CD4-positive, alpha-beta T cell (primary cell): ENCODE measurements at regions of chr1 and their contacts with region 1.

Region 1: DNA sequence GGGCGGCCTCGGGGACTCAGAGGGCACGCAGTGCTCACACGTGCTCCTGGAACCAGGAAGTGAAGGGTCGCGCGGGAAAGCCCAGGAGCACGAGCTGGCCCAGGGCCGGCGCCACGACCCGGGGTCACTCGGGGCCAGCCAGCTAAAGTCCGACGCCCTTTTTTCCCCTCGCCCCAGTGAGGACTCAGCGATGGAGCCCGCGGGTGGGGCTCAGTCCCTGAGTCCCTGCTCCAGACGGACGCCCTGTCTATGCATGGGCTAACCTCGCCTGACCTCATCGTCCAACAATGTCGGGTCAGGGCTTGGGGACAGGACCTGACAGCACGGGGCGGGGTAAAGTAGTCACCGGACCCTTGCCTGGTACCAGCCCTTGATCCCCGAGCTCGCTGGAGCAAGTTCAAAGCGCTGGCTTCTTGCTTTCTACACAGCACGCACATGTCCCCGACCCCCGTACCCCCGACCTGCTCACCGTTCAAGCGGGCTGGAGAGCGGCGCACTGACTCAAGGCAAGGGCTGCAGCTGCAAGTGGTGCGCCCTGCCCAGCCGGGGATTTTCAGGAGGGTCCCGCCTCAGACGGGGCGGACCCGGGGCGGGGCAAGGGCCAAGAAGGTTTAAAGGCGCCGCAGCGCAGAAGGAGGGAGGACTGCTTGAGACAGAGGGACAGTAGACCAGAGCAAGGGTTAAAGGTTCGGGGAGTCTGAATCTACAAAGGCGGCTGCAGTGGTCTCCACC is at the start of gene TAGLN2:
- DNase-seq: peak; percentile 76 to 95 (median 88)
- ATAC-seq: peak; percentile 52
- H3K4me3 ChIP-seq: peak within 1 kb of the TSS; percentile 98
- H3K4me3 Mint-ChIP-seq: peak within 1 kb of the TSS; percentile 94
- H3K27ac ChIP-seq: peak within 1 kb of the TSS; percentile 99 to 100
- H3K27ac Mint-ChIP-seq: peak within 1 kb of the TSS; percentile 94
- H3K4me1 ChIP-seq: peaks cover 52% of the 10 kb centered on the region
- H3K4me1 Mint-ChIP-seq: peaks cover 44% of the 10 kb centered on the region
- H3K27me3 ChIP-seq: no peaks in the 10 kb centered on the region
- H3K27me3 Mint-ChIP-seq: no peaks in the 10 kb centered on the region
- CTCF ChIP-seq: no peak
- total RNA-seq, gene TAGLN2: 301 to 311 TPM

Region 2: GRCh38 chr1:159854693-159855192 is 70.4 kb before region 1 on chr1:
- CTCF ChIA-PET with region 1: no interaction called
- POLR2A ChIA-PET with region 1: interaction called, 15 read pairs
- intact Hi-C with region 1: loop called (anchors 10 kb)
- DNase-seq: peak; percentile 55 to 87 (median 75)
- ATAC-seq: peak; percentile 96
- H3K4me3 ChIP-seq: peak overlapping the region; percentile 70
- H3K4me3 Mint-ChIP-seq: peak overlapping the region; percentile 95
- H3K27ac ChIP-seq: peak overlapping the region in 1 of 2 donors; percentile 46
- H3K27ac Mint-ChIP-seq: peak overlapping the region; percentile 88
- H3K4me1 ChIP-seq: peaks cover 12% of the 10 kb centered on the region
- H3K4me1 Mint-ChIP-seq: peaks cover 20% of the 10 kb centered on the region
- H3K27me3 ChIP-seq: no peaks in the 10 kb centered on the region
- H3K27me3 Mint-ChIP-seq: no peaks in the 10 kb centered on the region
- CTCF ChIP-seq: no peak

Region 3: DNA sequence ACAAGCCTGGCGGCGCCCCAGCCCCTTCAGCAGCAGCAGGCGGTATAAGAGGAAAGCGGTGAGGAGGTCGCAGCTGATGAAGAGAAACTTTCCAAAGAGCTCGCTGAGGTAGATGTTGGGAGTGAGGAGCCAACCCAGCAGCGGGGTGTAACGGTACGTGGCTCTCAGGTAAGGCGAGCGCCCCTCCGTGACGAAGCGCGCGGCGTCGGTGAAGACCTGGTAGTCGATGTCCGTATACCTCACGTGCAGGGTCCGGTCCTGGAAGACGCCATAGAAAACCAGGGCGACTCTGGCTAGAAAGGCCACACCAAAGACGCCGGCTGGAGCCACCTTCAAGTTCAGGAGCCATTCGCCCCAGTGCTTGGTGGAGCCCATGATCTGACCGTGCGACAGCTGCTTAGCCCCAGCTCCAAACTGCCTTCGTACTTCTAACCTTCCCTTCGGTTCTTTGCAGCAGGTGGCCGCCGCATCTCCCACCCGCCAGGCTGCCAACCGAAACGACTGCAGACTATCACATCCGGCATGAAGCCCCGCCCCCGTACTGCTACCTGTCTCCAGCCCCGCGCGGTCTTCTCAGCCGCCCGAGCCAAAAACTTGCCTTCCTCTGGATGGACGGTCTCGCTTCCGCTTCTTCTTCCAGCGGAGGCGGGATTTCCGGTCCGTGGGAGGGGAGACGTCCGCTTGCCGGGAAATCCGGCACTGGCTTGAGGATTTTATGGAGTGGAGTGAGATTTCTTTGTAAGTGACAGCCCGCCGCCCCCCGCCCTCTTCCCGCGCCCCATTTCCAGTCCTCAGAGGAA is 106.4 kb after region 1 on chr1 and contains the start of gene PIGM:
- CTCF ChIA-PET with region 1: no interaction called
- POLR2A ChIA-PET with region 1: interaction called, 15 read pairs
- intact Hi-C with region 1: loop called in 1 of 2 experiments (anchors 5 kb)
- DNase-seq: peak; percentile 82 to 98 (median 92)
- ATAC-seq: peak; percentile 98
- H3K4me3 ChIP-seq: peak within 1 kb of the TSS; percentile 89
- H3K4me3 Mint-ChIP-seq: peak within 1 kb of the TSS; percentile 98
- H3K27ac ChIP-seq: peak within 1 kb of the TSS; percentile 52 to 67
- H3K27ac Mint-ChIP-seq: peak within 1 kb of the TSS; percentile 94
- H3K4me1 ChIP-seq: peaks cover 24% of the 10 kb centered on the region
- H3K4me1 Mint-ChIP-seq: peaks cover 50% of the 10 kb centered on the region
- H3K27me3 ChIP-seq: no peaks in the 10 kb centered on the region
- H3K27me3 Mint-ChIP-seq: no peaks in the 10 kb centered on the region
- CTCF ChIP-seq: no peak
- total RNA-seq, gene PIGM: 2.1 to 2.2 TPM

Region 4: DNA sequence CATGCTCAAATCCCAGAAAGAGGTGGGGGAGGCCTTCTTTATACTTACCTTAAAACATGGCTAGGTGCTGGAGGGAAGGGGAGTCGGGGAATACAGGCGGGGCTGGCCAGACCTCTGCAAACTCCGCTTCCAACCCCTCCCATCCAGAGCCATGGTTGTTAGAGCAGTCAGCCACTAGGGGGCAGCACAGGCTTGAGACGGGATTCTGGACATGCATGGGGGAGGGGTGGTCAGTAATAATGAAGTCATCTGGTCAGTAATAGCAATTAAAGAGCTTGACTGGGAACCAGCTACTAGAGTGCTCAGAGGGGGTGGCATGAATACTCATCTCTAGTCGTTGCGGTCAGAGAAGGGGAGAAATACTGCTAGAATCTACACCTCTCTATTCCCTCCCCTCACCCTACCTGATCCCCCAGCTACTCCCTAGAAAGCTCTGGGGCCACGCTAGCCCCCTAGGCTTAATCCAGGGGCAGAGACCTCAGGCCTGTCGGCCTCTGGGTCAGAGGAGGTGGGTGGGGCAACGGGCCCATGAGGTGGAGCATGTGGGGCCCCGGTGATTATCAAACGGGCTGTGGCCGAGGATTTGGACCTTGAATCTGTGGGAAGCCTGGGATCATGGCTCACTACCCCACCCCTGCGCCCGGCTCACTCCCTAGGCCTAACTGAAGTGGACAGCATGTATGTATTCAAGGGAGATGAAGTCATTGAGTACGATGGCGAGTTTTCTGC is 268.1 kb after region 1 on chr1:
- CTCF ChIA-PET with region 1: no interaction called
- POLR2A ChIA-PET with region 1: no interaction called
- intact Hi-C with region 1: no loop called
- DNase-seq: peak; percentile 62 to 88 (median 78)
- ATAC-seq: peak; percentile 95
- H3K4me3 ChIP-seq: no peak overlapping the region
- H3K4me3 Mint-ChIP-seq: no peak overlapping the region
- H3K27ac ChIP-seq: no peak overlapping the region
- H3K27ac Mint-ChIP-seq: no peak overlapping the region
- H3K4me1 ChIP-seq: peaks cover 7% of the 10 kb centered on the region
- H3K4me1 Mint-ChIP-seq: no peaks in the 10 kb centered on the region
- H3K27me3 ChIP-seq: no peaks in the 10 kb centered on the region
- H3K27me3 Mint-ChIP-seq: no peaks in the 10 kb centered on the region
- CTCF ChIP-seq: peak; percentile 89

Region 5: DNA sequence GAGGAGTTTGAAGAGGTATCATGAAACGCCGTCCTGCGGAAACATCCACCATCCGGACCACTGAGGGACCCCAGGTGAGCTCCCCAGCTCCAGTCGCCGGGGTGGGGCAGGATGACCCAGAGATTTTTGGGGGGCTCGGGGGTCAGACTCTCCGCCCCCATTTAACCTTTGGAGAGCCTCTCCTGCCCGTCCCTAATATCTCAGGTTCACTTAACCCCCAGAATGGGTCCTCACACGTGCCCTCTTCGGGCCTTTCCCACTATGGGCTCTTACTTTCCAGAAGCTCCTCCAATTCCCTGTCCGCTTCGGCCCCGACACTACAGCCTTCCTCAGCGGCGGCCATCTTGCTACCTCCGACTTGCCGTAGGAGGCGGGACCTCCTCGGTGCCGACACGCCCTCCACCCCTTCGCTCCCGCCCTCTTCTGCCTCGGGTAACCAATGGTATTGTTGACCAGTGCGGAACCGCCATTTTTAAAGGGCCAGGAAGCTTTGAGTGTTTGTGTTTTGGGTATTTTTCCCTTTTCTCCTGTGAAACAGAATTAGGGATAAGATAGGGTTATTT is 359.7 kb after region 1 on chr1 and contains the start of gene PEX19:
- CTCF ChIA-PET with region 1: no interaction called
- POLR2A ChIA-PET with region 1: no interaction called
- intact Hi-C with region 1: loop called in 1 of 2 experiments (anchors 10 kb)
- DNase-seq: peak; percentile 90 to 96 (median 92)
- ATAC-seq: peak; percentile 100
- H3K4me3 ChIP-seq: peak within 1 kb of the TSS; percentile 94
- H3K4me3 Mint-ChIP-seq: peak within 1 kb of the TSS; percentile 99
- H3K27ac ChIP-seq: peak within 1 kb of the TSS; percentile 37 to 60
- H3K27ac Mint-ChIP-seq: peak within 1 kb of the TSS; percentile 87
- H3K4me1 ChIP-seq: peaks cover 23% of the 10 kb centered on the region
- H3K4me1 Mint-ChIP-seq: peaks cover 35% of the 10 kb centered on the region
- H3K27me3 ChIP-seq: no peaks in the 10 kb centered on the region
- H3K27me3 Mint-ChIP-seq: no peaks in the 10 kb centered on the region
- CTCF ChIP-seq: no peak
- total RNA-seq, gene PEX19: 32.0 to 33.4 TPM